Activated CD8-positive, alpha-beta memory T cell treated with anti-CD3 and anti-CD28 coated beads, Interleukin-2, amount 10 ng/mL, durations not matched to agents 7 days and 5 days (primary cell): ENCODE measurements at regions of chr2 and their contacts with region 1.

Region 1: GRCh38 chr2:98496750-98497493 is 52.3 kb downstream of the INPP4A start:
- DNase-seq: no peak
- ATAC-seq: no peak
- H3K4me3 Mint-ChIP-seq: no peak overlapping the region
- H3K27ac Mint-ChIP-seq: no peak overlapping the region
- H3K4me1 Mint-ChIP-seq: peaks cover 19% of the 10 kb centered on the region
- H3K27me3 Mint-ChIP-seq: no peaks in the 10 kb centered on the region

Region 2: GRCh38 chr2:98508709-98509066 is 11.8 kb after region 1 on chr2:
- CTCF ChIA-PET with region 1: interaction called, 10 read pairs
- DNase-seq: peak; percentile 68
- ATAC-seq: peak; percentile 58
- H3K4me3 Mint-ChIP-seq: peak overlapping the region; percentile 35
- H3K27ac Mint-ChIP-seq: peak overlapping the region; percentile 58
- H3K4me1 Mint-ChIP-seq: peaks cover 92% of the 10 kb centered on the region
- H3K27me3 Mint-ChIP-seq: no peaks in the 10 kb centered on the region